GM10248 (cell line): ENCODE measurements at regions of chr12 and their contacts with region 1.

Region 1: GRCh38 chr12:118020036-118020435 is 3.5 kb downstream of the RFC5 start:
- DNase-seq: no peak
- CTCF ChIP-seq: no peak

Region 2: GRCh38 chr12:117994551-117995438 is 25.2 kb before region 1 on chr12:
- CTCF ChIA-PET with region 1: no interaction called
- POLR2A ChIA-PET with region 1: no interaction called
- DNase-seq: no peak
- CTCF ChIP-seq: no peak

Region 3: DNA sequence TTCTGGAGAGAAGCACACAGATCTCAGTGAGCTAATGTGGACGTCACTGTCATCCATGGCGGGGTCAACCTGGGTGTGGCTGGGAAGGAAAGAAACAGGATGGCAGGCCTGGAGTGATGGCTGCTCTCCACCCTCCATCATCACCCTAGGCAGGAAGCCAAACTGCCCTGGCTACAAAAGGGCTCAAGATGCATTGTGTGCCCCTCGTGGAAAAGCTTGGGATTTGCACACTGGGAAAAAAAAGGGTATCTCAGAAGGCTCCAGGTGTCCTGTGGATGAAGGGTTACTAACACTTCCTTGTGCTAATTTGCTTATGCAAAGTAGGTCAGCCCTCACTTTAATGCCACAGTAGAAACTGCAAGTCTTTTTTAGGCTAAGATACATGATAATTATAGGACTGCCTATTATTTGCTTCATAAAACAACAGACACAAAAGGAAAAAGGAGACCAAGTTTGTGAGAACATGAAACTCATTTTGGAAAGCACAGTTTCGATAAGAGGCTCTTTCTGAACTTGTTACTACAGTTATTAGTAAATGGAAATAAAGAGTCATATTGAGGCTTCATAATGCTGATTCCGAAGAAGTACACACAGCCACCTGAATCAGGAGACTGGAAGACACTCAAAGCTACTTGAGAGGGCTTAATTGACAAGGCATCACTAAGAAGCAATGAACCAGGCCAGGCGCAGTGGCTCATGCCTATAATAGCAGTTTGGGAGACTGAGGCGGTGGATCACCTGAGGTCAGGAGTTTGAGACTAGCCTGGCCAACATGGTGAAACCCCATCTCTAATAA is 15.4 kb after region 1 on chr12:
- CTCF ChIA-PET with region 1: interaction called, 10 read pairs
- POLR2A ChIA-PET with region 1: no interaction called
- DNase-seq: peak; percentile 67
- CTCF ChIP-seq: no peak